ENCODE measurements at regions of chr14 and their contacts with region 1.

Region 1: GRCh38 chr14:104639889-104640548 is 35.4 kb upstream of the TMEM179 start:
- DNase-seq: peak in 1 of 2 donors; percentile 87
- ATAC-seq: peak; percentile 82
- H3K4me3 ChIP-seq: no peak overlapping the region
- H3K27ac ChIP-seq: no peak overlapping the region
- H3K4me1 ChIP-seq: no peaks in the 10 kb centered on the region
- H3K27me3 ChIP-seq: no peaks in the 10 kb centered on the region

Region 2: GRCh38 chr14:104078031-104078455 is 562.0 kb before region 1 on chr14:
- intact Hi-C with region 1: loop called (anchors 5 to 10 kb)
- DNase-seq: peak; percentile 90 to 92
- ATAC-seq: peak; percentile 89
- H3K4me3 ChIP-seq: no peak overlapping the region
- H3K27ac ChIP-seq: no peak overlapping the region
- H3K4me1 ChIP-seq: no peaks in the 10 kb centered on the region
- H3K27me3 ChIP-seq: peaks cover 2 to 5% of the 10 kb centered on the region in 2 donors

Region 3: DNA sequence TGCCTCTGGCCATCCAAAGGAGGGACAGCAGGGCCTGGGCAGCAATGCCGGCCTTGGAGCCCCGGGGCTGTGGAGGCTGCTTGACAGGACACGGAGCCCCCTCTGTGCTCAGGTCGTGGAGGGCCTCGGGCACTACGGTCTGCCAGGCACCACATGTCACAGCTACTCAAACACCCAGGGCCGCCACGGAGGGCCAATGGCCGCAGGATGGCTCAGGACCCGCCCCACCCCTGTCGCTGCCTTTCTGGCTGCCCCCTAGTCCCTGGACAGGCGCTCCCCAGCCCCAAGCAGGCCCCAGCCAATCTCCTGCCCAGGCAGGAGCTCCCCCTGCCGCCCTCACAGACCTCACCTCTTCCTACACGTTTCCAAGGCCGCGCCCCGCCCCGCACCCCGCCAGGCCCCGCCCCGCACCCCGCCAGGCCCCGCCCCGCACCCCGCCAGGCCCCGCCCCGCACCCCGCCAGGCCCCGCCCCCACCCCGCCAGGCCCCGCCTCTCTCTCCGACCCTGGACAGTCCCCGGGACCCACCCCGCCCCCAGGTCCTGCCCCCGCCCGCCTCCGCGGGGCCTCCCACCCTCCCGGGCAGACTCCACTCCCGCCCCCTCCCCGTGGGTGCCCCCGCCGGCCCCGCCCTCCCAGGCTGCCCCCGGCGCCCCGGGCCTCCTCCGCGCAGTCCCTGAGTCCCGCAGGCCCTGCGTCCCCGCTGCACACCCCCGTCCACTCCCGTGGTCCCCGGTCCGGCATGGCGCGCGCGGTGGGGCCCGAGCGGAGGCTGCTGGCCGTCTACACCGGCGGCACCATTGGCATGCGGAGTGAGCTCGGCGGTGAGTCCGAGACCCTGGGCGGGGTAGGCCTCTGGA is 554.8 kb before region 1 on chr14 and contains the start of gene ASPG:
- intact Hi-C with region 1: loop called in 1 of 2 experiments (anchors 10 kb)
- DNase-seq: peak; percentile 37 to 79
- ATAC-seq: peak; percentile 44
- H3K4me3 ChIP-seq: no peak within 1 kb of the TSS
- H3K27ac ChIP-seq: no peak within 1 kb of the TSS
- H3K4me1 ChIP-seq: no peaks in the 10 kb centered on the region
- H3K27me3 ChIP-seq: no peaks in the 10 kb centered on the region
- total RNA-seq, gene ASPG: 0.13 to 2.2 TPM

Region 4: GRCh38 chr14:104137297-104138097 is 502.5 kb before region 1 on chr14:
- intact Hi-C with region 1: loop called (anchors 2 to 5 kb)
- DNase-seq: peak; percentile 62 to 90
- ATAC-seq: peak; percentile 84
- H3K4me3 ChIP-seq: peak overlapping the region; percentile 5 to 21
- H3K27ac ChIP-seq: no peak overlapping the region
- H3K4me1 ChIP-seq: no peaks in the 10 kb centered on the region
- H3K27me3 ChIP-seq: no peaks in the 10 kb centered on the region

Region 5: DNA sequence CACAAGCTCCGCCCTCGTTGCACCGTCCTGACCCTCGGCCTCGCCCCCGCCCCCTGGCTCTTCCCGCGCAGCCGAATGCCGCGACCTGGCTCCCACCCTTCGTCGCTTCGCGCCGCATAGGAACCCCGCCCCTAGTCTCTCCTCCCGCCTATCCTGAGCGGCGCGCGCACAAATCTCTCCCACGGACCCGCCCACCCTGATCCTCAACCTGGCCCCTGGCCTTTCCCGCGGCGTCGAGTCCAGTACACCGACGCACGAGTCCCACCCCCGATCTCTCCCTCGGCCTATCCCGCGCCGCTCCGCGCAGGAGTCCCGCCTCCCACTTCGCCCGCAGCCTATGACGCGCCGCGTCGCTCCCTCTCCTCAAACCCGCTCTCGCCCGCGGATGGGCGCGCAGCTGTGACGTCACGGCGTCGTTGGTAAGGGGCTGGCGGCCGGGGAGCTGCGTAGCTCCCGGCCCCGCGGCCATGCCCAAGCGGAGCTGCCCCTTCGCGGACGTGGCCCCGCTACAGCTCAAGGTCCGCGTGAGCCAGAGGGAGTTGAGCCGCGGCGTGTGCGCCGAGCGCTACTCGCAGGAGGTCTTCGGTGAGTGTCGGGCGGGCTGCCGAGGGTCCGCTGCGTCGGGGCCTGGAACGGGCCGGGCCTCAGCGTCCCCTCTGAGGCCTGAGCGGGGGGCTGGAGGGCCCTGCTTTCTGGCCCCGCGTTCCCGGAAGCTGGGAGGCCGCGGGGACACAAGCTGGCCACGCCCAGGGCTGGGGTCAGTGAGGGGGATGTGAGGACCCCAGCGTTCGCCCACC is 112.9 kb after region 1 on chr14 and contains the start of gene SIVA1:
- intact Hi-C with region 1: no loop called
- DNase-seq: peak; percentile 100
- ATAC-seq: peak; percentile 98
- H3K4me3 ChIP-seq: peak within 1 kb of the TSS; percentile 55 to 81
- H3K27ac ChIP-seq: peak within 1 kb of the TSS; percentile 24 to 65
- H3K4me1 ChIP-seq: peaks cover 0 to 3% of the 10 kb centered on the region in 2 donors
- H3K27me3 ChIP-seq: no peaks in the 10 kb centered on the region
- total RNA-seq, gene SIVA1: 74.3 to 83.0 TPM

Region 6: DNA sequence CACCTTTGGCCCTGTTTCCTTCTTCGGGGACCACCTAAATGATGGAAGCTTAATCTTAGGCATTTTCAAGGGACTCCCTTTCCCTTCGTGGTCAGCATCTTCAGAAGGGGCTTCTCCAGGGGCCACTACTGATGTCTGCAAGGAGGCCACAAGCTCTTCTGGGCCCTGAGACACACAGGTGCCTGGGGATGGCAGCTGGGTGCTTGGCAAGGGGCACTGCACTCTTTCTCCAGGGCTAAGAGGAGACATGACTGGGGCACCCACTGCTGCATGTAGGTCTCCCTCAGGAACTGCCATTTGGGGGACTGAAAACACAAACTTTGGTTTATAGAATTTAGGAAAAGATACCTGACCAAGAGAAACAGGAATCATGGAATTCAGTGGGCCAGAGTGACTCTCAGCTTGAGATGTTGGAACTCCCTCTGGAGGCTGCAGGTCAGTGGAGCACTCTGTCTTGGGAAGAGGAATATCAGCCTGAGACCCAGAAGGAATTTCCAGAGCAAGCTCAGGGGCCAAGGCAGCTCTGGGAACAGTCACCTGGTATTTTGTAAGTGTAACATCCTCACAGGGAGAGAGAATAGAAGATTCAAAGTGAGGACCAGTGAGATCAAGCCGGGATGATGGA is 300.6 kb after region 1 on chr14:
- intact Hi-C with region 1: no loop called
- DNase-seq: peak in 1 of 2 donors; percentile 39
- ATAC-seq: no peak
- H3K4me3 ChIP-seq: no peak overlapping the region
- H3K27ac ChIP-seq: no peak overlapping the region
- H3K4me1 ChIP-seq: no peaks in the 10 kb centered on the region
- H3K27me3 ChIP-seq: no peaks in the 10 kb centered on the region

Measured in aorta (tissue), 5 donors.